Mammary epithelial cell (primary cell): ENCODE measurements at regions of chr2 and their contacts with region 1.

Region 1: DNA sequence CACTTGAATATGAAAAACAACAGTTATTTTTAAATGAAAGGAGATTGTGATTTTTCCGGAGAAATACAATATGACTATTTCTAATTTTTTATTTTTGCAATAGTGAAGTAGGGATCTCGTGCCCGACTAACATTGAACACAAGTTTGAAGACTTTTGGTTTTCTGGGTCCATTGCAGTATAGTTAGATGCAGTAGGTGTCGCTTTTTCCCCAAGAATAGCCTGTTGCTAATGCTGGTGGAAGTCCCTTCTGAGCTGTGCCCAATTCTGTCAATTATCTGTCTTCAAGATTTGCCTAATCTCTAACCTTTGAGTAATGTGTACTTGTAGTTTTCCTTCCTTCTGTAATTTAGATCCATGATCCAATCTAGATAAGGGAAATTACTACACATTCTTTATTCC is 36.5 kb downstream of the SEMA4F start:
- DNase-seq: peak; percentile 61
- H3K4me3 ChIP-seq: no peak overlapping the region
- H3K27ac ChIP-seq: no peak overlapping the region
- H3K4me1 ChIP-seq: peaks cover 27% of the 10 kb centered on the region
- H3K27me3 ChIP-seq: no peaks in the 10 kb centered on the region
- CTCF ChIP-seq: peak; percentile 86 to 88

Region 2: GRCh38 chr2:74587664-74588277 is 102.8 kb before region 1 on chr2:
- CTCF ChIA-PET with region 1: no interaction called
- dilution Hi-C with region 1: no loop called
- in situ Hi-C with region 1: no loop called
- intact Hi-C with region 1: no loop called
- DNase-seq: peak; percentile 51
- H3K4me3 ChIP-seq: no peak overlapping the region
- H3K27ac ChIP-seq: no peak overlapping the region
- H3K4me1 ChIP-seq: peaks cover 15% of the 10 kb centered on the region
- H3K27me3 ChIP-seq: no peaks in the 10 kb centered on the region
- CTCF ChIP-seq: peak; percentile 72 to 74

Region 3: GRCh38 chr2:74740389-74741075 is 50.0 kb after region 1 on chr2:
- CTCF ChIA-PET with region 1: no interaction called
- dilution Hi-C with region 1: no loop called
- in situ Hi-C with region 1: no loop called
- intact Hi-C with region 1: loop called (anchors 2 kb)
- DNase-seq: peak; percentile 98
- H3K4me3 ChIP-seq: no peak overlapping the region
- H3K27ac ChIP-seq: peak overlapping the region; percentile 90
- H3K4me1 ChIP-seq: peaks cover 31% of the 10 kb centered on the region
- H3K27me3 ChIP-seq: no peaks in the 10 kb centered on the region
- CTCF ChIP-seq: peak in 1 of 2 donors; percentile 29

Region 4: GRCh38 chr2:74845217-74846011 is 154.8 kb after region 1 on chr2:
- CTCF ChIA-PET with region 1: no interaction called
- dilution Hi-C with region 1: no loop called
- in situ Hi-C with region 1: no loop called
- intact Hi-C with region 1: loop called (anchors 2 kb)
- DNase-seq: peak; percentile 97
- H3K4me3 ChIP-seq: peak overlapping the region in 1 of 3 experiments; percentile 14
- H3K27ac ChIP-seq: peak overlapping the region; percentile 89
- H3K4me1 ChIP-seq: peaks cover 78% of the 10 kb centered on the region
- H3K27me3 ChIP-seq: no peaks in the 10 kb centered on the region
- CTCF ChIP-seq: no peak

Region 5: GRCh38 chr2:74982577-74982976 is 292.0 kb after region 1 on chr2:
- CTCF ChIA-PET with region 1: no interaction called
- dilution Hi-C with region 1: no loop called
- in situ Hi-C with region 1: no loop called
- intact Hi-C with region 1: loop called (anchors 1 kb)
- DNase-seq: peak; percentile 12
- H3K4me3 ChIP-seq: no peak overlapping the region
- H3K27ac ChIP-seq: no peak overlapping the region
- H3K4me1 ChIP-seq: no peaks in the 10 kb centered on the region
- H3K27me3 ChIP-seq: no peaks in the 10 kb centered on the region
- CTCF ChIP-seq: peak; percentile 30 to 55

Region 6: GRCh38 chr2:75241696-75242095 is 551.1 kb after region 1 on chr2:
- CTCF ChIA-PET with region 1: no interaction called
- dilution Hi-C with region 1: no loop called
- in situ Hi-C with region 1: no loop called
- intact Hi-C with region 1: loop called (anchors 1 kb)
- DNase-seq: peak; percentile 5
- H3K4me3 ChIP-seq: no peak overlapping the region
- H3K27ac ChIP-seq: no peak overlapping the region
- H3K4me1 ChIP-seq: no peaks in the 10 kb centered on the region
- H3K27me3 ChIP-seq: no peaks in the 10 kb centered on the region
- CTCF ChIP-seq: peak; percentile 26 to 35